ENCODE measurements at regions of chr4 and their contacts with region 1.

Region 1: GRCh38 chr4:65167719-65168118 is 502.6 kb downstream of the EPHA5 start:
- DNase-seq: no peak

Region 2: DNA sequence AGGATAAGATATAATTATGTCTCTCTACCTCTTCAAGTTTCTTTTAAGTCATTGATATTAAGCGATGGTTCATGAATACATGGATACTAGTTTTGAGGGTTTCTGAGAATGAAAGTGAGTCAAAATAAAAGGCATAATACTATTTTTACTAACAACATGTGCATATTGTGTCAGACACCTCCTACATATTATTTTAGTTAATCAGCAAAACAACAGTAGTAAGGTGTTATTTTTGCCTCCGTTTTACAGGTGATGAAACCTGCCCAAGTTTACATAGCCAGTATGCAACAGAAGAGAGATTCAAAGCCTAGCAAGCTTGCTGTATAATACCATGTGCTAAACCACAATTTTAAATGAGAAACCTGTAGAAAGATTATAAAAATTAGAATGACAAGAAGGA is 41.5 kb before region 1 on chr4:
- intact Hi-C with region 1: no loop called
- DNase-seq: no peak

Region 3: GRCh38 chr4:65152205-65152604 is 15.5 kb before region 1 on chr4:
- intact Hi-C with region 1: no loop called
- DNase-seq: no peak

Region 4: DNA sequence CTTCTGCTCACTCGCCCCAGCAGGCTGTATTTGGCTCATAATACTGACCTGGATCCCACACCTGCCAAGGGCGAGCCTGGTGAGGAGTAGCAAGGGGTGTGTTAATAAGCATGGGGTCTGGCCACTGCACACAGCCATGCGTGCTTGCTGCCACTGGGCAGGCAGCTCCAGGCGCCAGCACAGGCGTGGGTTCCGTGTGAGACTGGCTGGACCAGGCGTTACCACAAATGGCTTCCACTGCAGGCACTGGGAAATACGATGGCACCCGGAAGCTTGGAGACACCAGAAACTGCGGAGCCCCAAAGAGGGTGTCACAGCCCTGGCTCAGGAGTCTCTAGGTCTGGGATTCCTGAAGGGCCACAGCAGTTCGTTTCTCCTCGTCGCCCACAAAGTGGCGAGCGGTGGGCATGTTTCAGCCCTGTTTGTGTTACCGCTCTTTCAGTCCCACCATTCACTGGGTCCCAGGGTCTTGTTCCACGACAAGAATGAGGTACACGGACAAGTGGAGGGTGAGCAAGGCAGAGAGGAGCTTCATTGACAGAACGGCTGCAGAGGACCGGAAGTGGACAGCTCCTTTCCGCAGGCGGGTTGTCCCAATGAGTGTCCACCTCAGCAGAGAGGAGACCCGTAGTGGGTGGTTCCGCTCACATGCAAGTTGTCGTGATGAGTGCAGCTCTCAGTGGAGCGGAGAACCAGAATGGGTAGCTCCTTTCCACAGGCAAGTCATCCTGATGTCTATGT is 73.7 kb after region 1 on chr4:
- intact Hi-C with region 1: loop called in 1 of 2 experiments (anchors 5 kb)
- DNase-seq: no peak

Region 5: GRCh38 chr4:65535113-65535512 is 367.4 kb after region 1 on chr4:
- intact Hi-C with region 1: no loop called
- DNase-seq: no peak

Region 6: GRCh38 chr4:65658117-65658516 is 490.4 kb after region 1 on chr4:
- intact Hi-C with region 1: no loop called
- DNase-seq: no peak